IMR-90 (cell line): ENCODE measurements at regions of chr10 and their contacts with region 1.

Region 1: DNA sequence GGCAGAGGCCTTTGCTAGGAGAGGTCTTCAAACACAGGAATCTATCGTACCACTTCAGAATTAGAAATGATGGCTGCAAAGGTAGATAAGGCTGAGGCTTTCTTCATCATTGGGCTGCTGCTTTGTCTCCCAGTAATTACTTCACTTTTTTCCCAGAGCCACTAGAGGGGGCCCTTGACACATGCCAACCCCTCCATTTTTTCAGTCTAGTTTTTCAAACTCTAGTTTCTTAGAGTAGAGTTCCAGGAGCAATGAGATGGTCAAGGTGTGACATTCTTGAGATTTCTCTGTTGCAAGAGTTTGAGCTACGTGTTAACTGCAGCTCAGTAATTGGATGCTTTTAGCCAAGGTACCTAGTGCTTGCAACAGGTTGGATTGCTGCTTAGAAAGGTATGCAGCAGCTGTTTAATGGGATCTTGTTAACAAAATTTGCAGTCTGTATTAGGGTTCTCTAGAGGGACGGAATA is 33.8 kb upstream of the RBM20 start:
- DNase-seq: peak; percentile 49
- ATAC-seq: peak; percentile 82
- H3K4me3 ChIP-seq: no peak overlapping the region
- H3K27ac ChIP-seq: no peak overlapping the region
- H3K4me1 ChIP-seq: peaks cover 6% of the 10 kb centered on the region
- H3K27me3 ChIP-seq: peaks cover 11% of the 10 kb centered on the region
- CTCF ChIP-seq: peak; percentile 91
- POLR2A ChIP-seq: no peak
- RAD21 ChIP-seq: peak; percentile 94

Region 2: DNA sequence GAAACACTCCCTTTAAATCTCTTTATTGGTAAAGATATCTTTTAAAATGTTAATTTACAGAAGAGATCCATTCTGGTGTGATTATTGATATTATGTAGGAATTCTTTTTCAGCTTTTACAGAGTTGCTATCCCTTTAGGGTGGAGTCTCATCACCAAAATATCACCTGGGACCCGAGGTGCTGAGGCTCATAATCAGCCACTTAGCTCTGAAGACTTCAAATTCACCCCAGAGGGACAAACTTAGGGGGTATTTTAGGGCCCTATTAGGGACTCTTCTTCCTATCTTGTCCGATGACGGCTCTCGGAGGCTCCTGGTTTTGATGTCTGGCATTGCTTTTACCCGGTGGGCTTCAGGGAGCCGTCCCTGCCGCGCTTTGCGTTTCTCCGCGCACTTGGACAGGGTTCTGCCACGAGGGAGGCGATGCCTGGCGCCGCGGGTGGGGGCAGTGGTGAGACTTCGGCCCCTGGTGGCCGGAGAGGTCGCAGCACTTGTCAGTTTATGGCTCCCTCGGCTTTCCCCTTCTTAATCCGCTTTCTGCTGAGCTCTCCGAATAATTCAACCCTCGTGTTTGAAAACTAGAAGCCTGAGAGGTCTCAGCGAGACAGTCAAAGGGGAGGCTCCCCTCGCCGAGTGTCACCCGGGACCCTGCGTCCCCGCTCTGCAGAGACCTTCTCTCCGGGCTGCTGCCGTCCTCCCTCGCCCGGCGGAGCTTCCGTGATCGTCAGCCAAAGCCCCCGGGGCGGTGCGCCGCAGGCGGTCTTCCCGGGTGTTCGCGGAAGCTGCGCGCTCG is 61.6 kb after region 1 on chr10:
- CTCF ChIA-PET with region 1: interaction called, 12 read pairs
- POLR2A ChIA-PET with region 1: no interaction called
- dilution Hi-C with region 1: no loop called
- in situ Hi-C with region 1: loop called (anchors 5 kb)
- intact Hi-C with region 1: loop called (anchors 2 kb)
- DNase-seq: peak; percentile 67
- ATAC-seq: peak; percentile 99
- H3K4me3 ChIP-seq: peak overlapping the region; percentile 54
- H3K27ac ChIP-seq: peak overlapping the region; percentile 44
- H3K4me1 ChIP-seq: no peaks in the 10 kb centered on the region
- H3K27me3 ChIP-seq: peaks cover 13% of the 10 kb centered on the region
- CTCF ChIP-seq: peak; percentile 99
- POLR2A ChIP-seq: no peak
- RAD21 ChIP-seq: peak; percentile 66

Region 3: GRCh38 chr10:110733218-110733952 is 123.0 kb after region 1 on chr10:
- CTCF ChIA-PET with region 1: no interaction called
- POLR2A ChIA-PET with region 1: no interaction called
- dilution Hi-C with region 1: no loop called
- in situ Hi-C with region 1: no loop called
- intact Hi-C with region 1: loop called (anchors 5 kb)
- DNase-seq: no peak
- ATAC-seq: peak; percentile 37; the same call in 1 of the 2 replicates
- H3K4me3 ChIP-seq: peak overlapping the region; percentile 43; the same call in 1 of the 2 replicates
- H3K27ac ChIP-seq: no peak overlapping the region
- H3K4me1 ChIP-seq: no peaks in the 10 kb centered on the region
- H3K27me3 ChIP-seq: peaks cover 9% of the 10 kb centered on the region
- CTCF ChIP-seq: no peak
- POLR2A ChIP-seq: no peak
- RAD21 ChIP-seq: no peak

Region 4: DNA sequence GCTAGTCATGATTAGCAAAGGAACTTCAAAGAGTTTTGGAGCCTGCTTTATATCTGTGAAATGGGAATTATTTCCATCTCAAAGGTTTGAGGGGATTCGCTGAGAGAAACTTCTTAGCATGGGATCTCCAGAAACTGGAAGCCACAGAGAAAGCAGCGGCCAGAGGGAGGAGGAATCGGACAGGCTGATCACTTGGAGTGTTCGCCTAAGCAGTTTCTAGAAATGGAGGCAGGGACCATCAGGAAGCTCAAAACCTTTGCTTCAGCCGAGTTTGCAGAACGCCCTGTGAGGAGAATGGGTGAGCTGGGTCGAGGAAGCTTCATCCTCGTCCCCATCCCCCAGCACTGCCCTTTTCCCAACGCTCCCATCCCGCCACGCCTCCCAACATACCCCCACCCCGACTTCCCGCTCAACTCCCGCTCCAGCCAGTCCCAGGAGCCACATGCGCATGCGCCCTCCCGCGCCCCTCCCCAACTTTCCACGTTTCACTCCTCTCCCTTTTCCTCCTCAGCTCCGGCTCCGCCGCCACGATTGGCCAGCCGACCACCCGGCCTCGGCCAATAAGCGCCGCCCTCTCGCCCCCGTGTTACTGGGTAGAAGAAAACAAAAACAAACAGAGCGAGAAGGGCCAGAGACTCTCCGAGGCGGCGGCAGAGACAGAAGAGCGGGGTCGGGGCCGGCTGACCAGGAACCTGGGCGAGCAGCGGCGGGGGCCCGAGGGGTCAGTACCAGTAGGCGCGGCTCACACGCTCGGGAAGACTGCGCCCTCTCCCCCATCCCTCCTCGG is 261.1 kb after region 1 on chr10 and contains the start of gene PDCD4:
- CTCF ChIA-PET with region 1: interaction called, 3 read pairs
- POLR2A ChIA-PET with region 1: no interaction called
- dilution Hi-C with region 1: no loop called
- in situ Hi-C with region 1: no loop called
- intact Hi-C with region 1: loop called (anchors 5 kb)
- DNase-seq: peak; percentile 96
- ATAC-seq: peak; percentile 92
- H3K4me3 ChIP-seq: peak within 1 kb of the TSS; percentile 54
- H3K27ac ChIP-seq: peak within 1 kb of the TSS; percentile 89
- H3K4me1 ChIP-seq: peaks cover 4% of the 10 kb centered on the region
- H3K27me3 ChIP-seq: no peaks in the 10 kb centered on the region
- CTCF ChIP-seq: no peak
- POLR2A ChIP-seq: peak; percentile 97
- RAD21 ChIP-seq: no peak
- total RNA-seq, gene PDCD4: 10.9 and 46.9 TPM in 2 replicates

Region 5: DNA sequence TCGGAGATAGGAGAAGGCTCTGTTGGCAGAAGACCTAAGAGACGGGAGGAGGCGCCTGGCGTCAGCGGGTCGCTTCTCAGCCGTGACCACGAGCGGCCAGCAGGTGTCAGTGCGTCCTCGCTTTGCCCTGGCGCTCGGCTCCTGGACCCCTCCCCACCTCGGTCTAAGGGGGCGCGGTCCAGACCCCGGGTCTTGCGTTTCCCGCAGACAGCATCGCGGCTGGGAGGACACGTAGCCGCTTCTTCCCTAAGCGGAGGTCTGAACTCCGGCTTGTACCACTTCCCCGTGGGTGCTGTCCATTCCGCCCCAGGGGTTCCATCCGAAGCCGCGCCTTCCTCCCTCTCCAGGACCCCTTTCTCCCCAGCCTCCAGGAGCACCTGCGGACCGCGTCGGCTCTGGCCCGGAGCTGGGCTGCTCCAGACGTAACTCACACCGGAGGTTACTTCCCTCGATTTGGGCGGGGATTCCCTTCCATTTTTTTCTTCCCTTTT is 465.9 kb after region 1 on chr10:
- CTCF ChIA-PET with region 1: no interaction called
- POLR2A ChIA-PET with region 1: interaction called, 12 read pairs
- dilution Hi-C with region 1: no loop called
- in situ Hi-C with region 1: no loop called
- intact Hi-C with region 1: no loop called
- DNase-seq: peak; percentile 27
- ATAC-seq: peak; percentile 87
- H3K4me3 ChIP-seq: peak overlapping the region; percentile 28
- H3K27ac ChIP-seq: no peak overlapping the region
- H3K4me1 ChIP-seq: no peaks in the 10 kb centered on the region; the same call in 1 of the 2 replicates
- H3K27me3 ChIP-seq: peaks cover 68% of the 10 kb centered on the region
- CTCF ChIP-seq: peak; percentile 61
- POLR2A ChIP-seq: no peak
- RAD21 ChIP-seq: peak; percentile 55

Region 6: GRCh38 chr10:111756217-111757061 is 1146.1 kb after region 1 on chr10:
- CTCF ChIA-PET with region 1: no interaction called
- POLR2A ChIA-PET with region 1: no interaction called
- dilution Hi-C with region 1: no loop called
- in situ Hi-C with region 1: no loop called
- intact Hi-C with region 1: no loop called
- DNase-seq: no peak
- ATAC-seq: no peak
- H3K4me3 ChIP-seq: no peak overlapping the region
- H3K27ac ChIP-seq: no peak overlapping the region
- H3K4me1 ChIP-seq: no peaks in the 10 kb centered on the region
- H3K27me3 ChIP-seq: no peaks in the 10 kb centered on the region
- CTCF ChIP-seq: no peak
- POLR2A ChIP-seq: no peak
- RAD21 ChIP-seq: no peak